GM12878 (cell line): ENCODE measurements at regions of chr16 and their contacts with region 1.

Region 1: DNA sequence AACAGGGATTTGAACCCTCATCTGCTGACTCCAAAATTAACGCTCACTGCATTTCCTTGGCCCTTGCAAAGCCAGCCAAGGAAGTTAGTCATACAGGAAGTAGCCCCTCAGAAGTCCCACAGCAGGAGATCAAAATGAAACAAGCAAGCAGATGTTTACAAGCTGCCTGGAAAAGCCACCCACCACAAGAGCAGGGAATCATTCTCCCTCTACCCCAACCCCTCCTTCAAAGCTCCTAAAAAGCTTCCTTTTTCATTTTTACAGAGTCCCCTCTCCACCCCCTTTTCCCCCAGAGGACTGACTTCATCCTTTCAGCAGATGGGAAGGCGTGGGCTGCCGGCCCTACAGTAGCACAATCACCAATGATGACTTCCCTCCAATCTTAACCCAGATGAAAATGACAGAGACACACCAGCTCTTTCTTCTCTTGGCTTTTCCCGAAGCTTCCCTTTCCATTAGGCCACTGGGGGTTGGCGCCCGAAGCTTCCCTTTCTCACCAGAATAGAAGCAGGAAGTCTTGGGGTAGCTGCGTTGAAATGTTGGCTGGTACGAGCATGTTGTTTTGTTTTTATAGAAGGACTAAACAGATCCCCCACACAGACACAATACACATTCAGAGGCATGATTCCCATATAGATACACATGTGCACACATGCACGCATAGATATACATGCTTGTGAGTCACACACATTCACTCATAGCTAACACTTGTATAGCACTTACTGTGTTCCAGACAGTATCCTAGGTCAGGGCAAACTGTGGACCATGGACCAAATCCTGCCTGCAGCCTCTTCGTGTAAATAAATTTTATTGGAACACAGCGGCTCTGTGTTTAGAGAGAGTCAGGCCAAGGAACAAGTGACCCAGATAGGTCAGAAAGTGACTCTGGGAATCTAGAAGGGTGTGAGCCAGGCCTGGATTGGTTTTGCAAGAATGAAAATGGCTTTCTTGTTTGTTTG is 17.4 kb downstream of the ITPRIPL2 start:
- DNase-seq: no peak
- ATAC-seq: peak; percentile 9; the same call in 2 of the 3 replicates
- H3K4me3 ChIP-seq: peak overlapping the region; percentile 10; the same call in 1 of the 2 replicates
- H3K27ac ChIP-seq: peak overlapping the region; percentile 29
- H3K4me1 ChIP-seq: peaks cover 73% of the 10 kb centered on the region
- H3K27me3 ChIP-seq: no peaks in the 10 kb centered on the region
- CTCF ChIP-seq: no peak
- EP300 ChIP-seq: no peak
- POLR2A ChIP-seq: no peak
- RAD21 ChIP-seq: no peak

Region 2: GRCh38 chr16:19086322-19087199 is 44.6 kb before region 1 on chr16:
- CTCF ChIA-PET with region 1: interaction called, 4 read pairs
- POLR2A ChIA-PET with region 1: no interaction called
- RAD21 ChIA-PET with region 1: no interaction called
- SMC1A ChIA-PET with region 1: interaction called, 8 read pairs
- in situ Hi-C with region 1: no loop called
- intact Hi-C with region 1: loop called (anchors 5 kb)
- DNase-seq: peak; percentile 20
- ATAC-seq: peak; percentile 100
- H3K4me3 ChIP-seq: peak overlapping the region; percentile 64; the same call in 1 of the 2 replicates
- H3K27ac ChIP-seq: no peak overlapping the region
- H3K4me1 ChIP-seq: peaks cover 3% of the 10 kb centered on the region; the same call in 1 of the 2 replicates
- H3K27me3 ChIP-seq: no peaks in the 10 kb centered on the region
- CTCF ChIP-seq: peak; percentile 95 to 96 (median 95)
- EP300 ChIP-seq: no peak
- POLR2A ChIP-seq: peak; percentile 43; the same call in 1 of the 2 replicates
- RAD21 ChIP-seq: peak; percentile 97

Region 3: GRCh38 chr16:19105891-19106624 is 25.1 kb before region 1 on chr16:
- CTCF ChIA-PET with region 1: interaction called, 3 read pairs
- POLR2A ChIA-PET with region 1: interaction called, 7 read pairs
- RAD21 ChIA-PET with region 1: interaction called, 4 read pairs
- SMC1A ChIA-PET with region 1: interaction called, 13 read pairs
- in situ Hi-C with region 1: no loop called
- intact Hi-C with region 1: no loop called
- DNase-seq: no peak
- ATAC-seq: no peak
- H3K4me3 ChIP-seq: no peak overlapping the region
- H3K27ac ChIP-seq: no peak overlapping the region
- H3K4me1 ChIP-seq: peaks cover 24% of the 10 kb centered on the region
- H3K27me3 ChIP-seq: no peaks in the 10 kb centered on the region
- CTCF ChIP-seq: no peak
- EP300 ChIP-seq: no peak
- POLR2A ChIP-seq: no peak
- RAD21 ChIP-seq: no peak

Region 4: DNA sequence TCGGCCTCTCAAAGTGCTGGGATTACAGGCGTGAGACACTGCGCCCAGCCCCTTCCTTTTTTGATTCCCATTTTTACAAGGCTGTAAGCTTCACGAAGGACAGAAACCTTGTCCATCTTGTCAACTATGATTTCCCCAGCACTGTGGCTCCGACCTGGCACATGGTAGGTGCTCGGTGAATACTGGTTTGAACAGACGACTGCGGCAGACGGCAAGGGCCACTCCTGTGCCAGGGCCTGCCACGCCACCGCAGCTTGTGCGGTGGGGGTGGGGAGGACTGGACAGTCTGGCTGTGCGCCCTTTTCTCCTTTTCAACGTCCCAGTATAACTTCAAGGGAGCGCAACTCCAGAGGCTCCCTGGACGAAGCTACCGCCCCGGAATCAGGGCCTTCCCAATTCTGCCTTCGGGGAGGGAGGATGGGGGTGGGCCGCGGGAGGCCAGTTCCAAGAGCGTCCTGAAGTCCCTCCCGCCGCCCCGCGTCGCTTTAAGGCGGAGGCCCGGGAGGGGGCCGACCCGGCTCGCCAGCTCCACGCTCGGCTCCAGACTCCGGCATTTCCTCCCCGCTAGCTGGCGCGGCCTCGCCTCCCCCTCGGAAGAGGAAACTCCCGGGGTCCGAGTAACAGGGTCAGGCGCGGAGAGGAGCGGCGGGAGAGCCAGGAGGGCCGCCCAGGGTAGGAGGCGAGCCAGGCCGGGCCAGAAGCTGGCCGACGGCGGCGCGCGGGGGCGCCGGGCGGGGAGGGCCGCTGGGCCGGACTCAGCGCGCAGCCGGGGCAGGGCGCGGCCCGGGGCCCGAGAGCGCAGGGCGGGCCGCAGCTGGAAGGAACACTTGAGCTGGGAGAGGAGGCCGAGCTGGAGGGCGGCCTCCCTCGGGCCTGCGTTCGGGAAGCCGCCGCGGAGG is 17.4 kb before region 1 on chr16 and contains the start of gene ITPRIPL2:
- CTCF ChIA-PET with region 1: interaction called, 11 read pairs
- POLR2A ChIA-PET with region 1: interaction called, 26 read pairs
- RAD21 ChIA-PET with region 1: interaction called, 4 read pairs
- SMC1A ChIA-PET with region 1: interaction called, 60 read pairs
- in situ Hi-C with region 1: no loop called
- intact Hi-C with region 1: loop called (anchors 2 kb)
- DNase-seq: no peak
- ATAC-seq: peak; percentile 64
- H3K4me3 ChIP-seq: peak within 1 kb of the TSS; percentile 77
- H3K27ac ChIP-seq: peak within 1 kb of the TSS; percentile 61
- H3K4me1 ChIP-seq: peaks cover 31% of the 10 kb centered on the region
- H3K27me3 ChIP-seq: no peaks in the 10 kb centered on the region
- CTCF ChIP-seq: no peak
- EP300 ChIP-seq: no peak
- POLR2A ChIP-seq: peak; percentile 72
- RAD21 ChIP-seq: no peak
- polyA plus RNA-seq, gene ITPRIPL2: 0.48 to 0.68 TPM

Region 5: GRCh38 chr16:19118938-19119431 is 12.1 kb before region 1 on chr16:
- CTCF ChIA-PET with region 1: interaction called, 11 read pairs
- POLR2A ChIA-PET with region 1: interaction called, 26 read pairs
- RAD21 ChIA-PET with region 1: interaction called, 4 read pairs
- SMC1A ChIA-PET with region 1: interaction called, 60 read pairs
- in situ Hi-C with region 1: no loop called
- intact Hi-C with region 1: loop called (anchors 2 kb)
- DNase-seq: no peak
- ATAC-seq: peak; percentile 2; the same call in 2 of the 3 replicates
- H3K4me3 ChIP-seq: peak overlapping the region; percentile 66
- H3K27ac ChIP-seq: peak overlapping the region; percentile 62
- H3K4me1 ChIP-seq: peaks cover 26% of the 10 kb centered on the region
- H3K27me3 ChIP-seq: no peaks in the 10 kb centered on the region
- CTCF ChIP-seq: no peak
- EP300 ChIP-seq: no peak
- POLR2A ChIP-seq: no peak
- RAD21 ChIP-seq: no peak

Region 6: DNA sequence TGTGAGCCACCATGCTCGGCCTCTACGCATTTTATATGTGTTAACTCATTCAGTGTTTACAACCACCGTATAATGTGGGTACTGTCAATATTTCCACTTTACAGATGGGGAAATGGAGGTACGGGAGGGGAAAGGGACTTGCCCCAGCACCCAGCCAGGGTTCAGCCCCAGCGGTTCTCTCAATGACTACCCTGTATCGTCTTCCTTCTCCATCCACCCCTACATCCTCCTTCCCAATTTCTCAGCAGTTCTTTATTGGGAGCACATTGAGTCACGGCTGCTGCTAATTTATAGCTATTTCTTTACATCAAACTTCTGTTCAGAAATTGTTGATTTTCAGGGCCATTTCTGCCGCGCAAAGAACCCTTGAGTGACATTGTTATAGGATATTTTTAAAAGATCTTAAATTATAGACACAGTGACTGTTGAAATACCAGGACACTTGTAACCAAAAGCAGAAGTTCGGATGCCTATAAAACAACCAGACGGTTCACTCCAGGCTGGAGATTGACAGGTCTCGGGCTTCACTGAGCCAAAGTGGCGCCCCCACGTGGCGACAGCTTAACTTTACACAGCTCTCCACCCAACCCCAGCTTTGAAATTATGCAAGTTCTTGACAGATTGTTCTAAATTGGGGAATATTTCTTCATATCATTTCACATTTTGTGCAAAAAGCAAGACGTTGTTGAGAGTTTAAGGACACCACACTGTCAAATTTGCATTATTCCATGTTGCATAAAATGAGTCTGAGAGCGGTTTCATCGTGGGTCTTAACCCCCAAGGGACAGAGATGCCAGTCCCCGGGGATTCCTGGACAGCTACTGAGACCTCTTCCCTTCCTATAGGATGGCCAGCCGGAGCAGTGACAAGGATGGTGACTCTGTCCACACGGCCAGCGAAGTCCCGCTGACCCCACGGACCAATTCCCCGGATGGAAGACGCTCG is 48.7 kb after region 1 on chr16:
- CTCF ChIA-PET with region 1: interaction called, 17 read pairs
- POLR2A ChIA-PET with region 1: no interaction called
- RAD21 ChIA-PET with region 1: interaction called, 3 read pairs
- SMC1A ChIA-PET with region 1: interaction called, 5 read pairs
- in situ Hi-C with region 1: no loop called
- intact Hi-C with region 1: no loop called
- DNase-seq: no peak
- ATAC-seq: peak; percentile 94
- H3K4me3 ChIP-seq: no peak overlapping the region
- H3K27ac ChIP-seq: no peak overlapping the region
- H3K4me1 ChIP-seq: no peaks in the 10 kb centered on the region
- H3K27me3 ChIP-seq: no peaks in the 10 kb centered on the region
- CTCF ChIP-seq: peak; percentile 61 to 75 (median 68)
- EP300 ChIP-seq: no peak
- POLR2A ChIP-seq: no peak
- RAD21 ChIP-seq: peak; percentile 55